CD8-positive, alpha-beta T cell (primary cell): ENCODE measurements at regions of chr4 and their contacts with region 1.

Region 1: GRCh38 chr4:36218121-36218520 is 26.2 kb downstream of the ARAP2 start:
- DNase-seq: no peak
- ATAC-seq: no peak
- H3K4me3 ChIP-seq: no peak overlapping the region
- H3K4me3 Mint-ChIP-seq: peak overlapping the region; percentile 9
- H3K27ac ChIP-seq: no peak overlapping the region
- H3K27ac Mint-ChIP-seq: peak overlapping the region; percentile 24
- H3K4me1 ChIP-seq: peaks cover 27% of the 10 kb centered on the region
- H3K4me1 Mint-ChIP-seq: peaks cover 71% of the 10 kb centered on the region
- H3K27me3 ChIP-seq: no peaks in the 10 kb centered on the region
- H3K27me3 Mint-ChIP-seq: no peaks in the 10 kb centered on the region
- CTCF ChIP-seq: no peak

Region 2: DNA sequence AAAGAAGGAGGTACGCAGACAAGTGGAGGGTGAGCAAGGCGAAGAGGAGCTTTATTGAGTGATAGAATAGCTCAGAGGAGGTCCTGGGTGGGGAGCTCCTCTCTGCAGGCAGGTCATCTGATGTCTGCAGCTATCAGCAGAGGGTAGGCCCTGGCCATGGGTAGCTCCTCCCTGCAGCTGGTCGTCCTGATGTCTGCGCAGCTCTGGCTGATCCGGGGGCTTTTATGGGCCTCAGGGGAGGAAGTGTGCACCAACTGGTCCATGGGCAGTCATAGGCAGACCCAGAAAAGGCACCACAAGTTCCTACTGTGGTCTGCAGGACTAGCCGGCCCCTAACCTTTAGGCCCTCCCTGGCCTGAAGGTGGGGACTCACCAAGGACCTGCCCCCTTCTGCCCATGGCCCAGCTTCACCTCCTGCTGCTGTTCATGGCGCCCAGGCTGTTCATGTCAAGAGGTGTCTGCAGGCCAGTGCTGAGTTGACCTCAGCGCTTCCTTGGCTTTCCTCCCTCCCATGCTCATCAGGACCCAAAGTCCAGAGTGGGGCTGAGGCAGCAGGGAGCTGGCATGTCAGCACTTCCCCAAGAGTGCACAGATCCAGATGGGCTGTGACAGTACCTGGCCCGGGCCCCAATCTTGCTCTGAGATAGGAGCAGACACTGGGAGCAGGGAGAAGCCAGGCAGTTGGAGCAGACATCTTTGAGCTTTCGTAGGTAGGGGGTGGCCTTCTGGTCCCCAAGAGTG is 19.9 kb before region 1 on chr4:
- CTCF ChIA-PET with region 1: no interaction called
- POLR2A ChIA-PET with region 1: interaction called, 3 read pairs
- intact Hi-C with region 1: loop called in 1 of 2 experiments (anchors 2 kb)
- DNase-seq: no peak
- ATAC-seq: no peak
- H3K4me3 ChIP-seq: no peak overlapping the region
- H3K4me3 Mint-ChIP-seq: no peak overlapping the region
- H3K27ac ChIP-seq: no peak overlapping the region
- H3K27ac Mint-ChIP-seq: no peak overlapping the region
- H3K4me1 ChIP-seq: peaks cover 9% of the 10 kb centered on the region
- H3K4me1 Mint-ChIP-seq: peaks cover 35% of the 10 kb centered on the region
- H3K27me3 ChIP-seq: no peaks in the 10 kb centered on the region
- H3K27me3 Mint-ChIP-seq: no peaks in the 10 kb centered on the region
- CTCF ChIP-seq: no peak

Region 3: GRCh38 chr4:36235314-36235713 is 17.2 kb after region 1 on chr4:
- CTCF ChIA-PET with region 1: no interaction called
- POLR2A ChIA-PET with region 1: no interaction called
- intact Hi-C with region 1: loop called in 1 of 2 experiments (anchors 1 kb)
- DNase-seq: peak in 2 of 9 experiments; percentile 17 to 33
- ATAC-seq: peak; percentile 43
- H3K4me3 ChIP-seq: no peak overlapping the region
- H3K4me3 Mint-ChIP-seq: no peak overlapping the region
- H3K27ac ChIP-seq: no peak overlapping the region
- H3K27ac Mint-ChIP-seq: peak overlapping the region; percentile 62
- H3K4me1 ChIP-seq: peaks cover 23% of the 10 kb centered on the region
- H3K4me1 Mint-ChIP-seq: peaks cover 88% of the 10 kb centered on the region
- H3K27me3 ChIP-seq: no peaks in the 10 kb centered on the region
- H3K27me3 Mint-ChIP-seq: no peaks in the 10 kb centered on the region
- CTCF ChIP-seq: no peak

Region 4: GRCh38 chr4:36249610-36250009 is 31.5 kb after region 1 on chr4:
- CTCF ChIA-PET with region 1: interaction called, 6 read pairs
- POLR2A ChIA-PET with region 1: interaction called, 4 read pairs
- intact Hi-C with region 1: loop called in 1 of 2 experiments (anchors 5 kb)
- DNase-seq: no peak
- ATAC-seq: no peak
- H3K4me3 ChIP-seq: no peak overlapping the region
- H3K4me3 Mint-ChIP-seq: no peak overlapping the region
- H3K27ac ChIP-seq: no peak overlapping the region
- H3K27ac Mint-ChIP-seq: no peak overlapping the region
- H3K4me1 ChIP-seq: peaks cover 19% of the 10 kb centered on the region
- H3K4me1 Mint-ChIP-seq: peaks cover 47% of the 10 kb centered on the region
- H3K27me3 ChIP-seq: no peaks in the 10 kb centered on the region
- H3K27me3 Mint-ChIP-seq: no peaks in the 10 kb centered on the region
- CTCF ChIP-seq: no peak